ENCODE measurements at regions of chr6 and their contacts with region 1.

Region 1: DNA sequence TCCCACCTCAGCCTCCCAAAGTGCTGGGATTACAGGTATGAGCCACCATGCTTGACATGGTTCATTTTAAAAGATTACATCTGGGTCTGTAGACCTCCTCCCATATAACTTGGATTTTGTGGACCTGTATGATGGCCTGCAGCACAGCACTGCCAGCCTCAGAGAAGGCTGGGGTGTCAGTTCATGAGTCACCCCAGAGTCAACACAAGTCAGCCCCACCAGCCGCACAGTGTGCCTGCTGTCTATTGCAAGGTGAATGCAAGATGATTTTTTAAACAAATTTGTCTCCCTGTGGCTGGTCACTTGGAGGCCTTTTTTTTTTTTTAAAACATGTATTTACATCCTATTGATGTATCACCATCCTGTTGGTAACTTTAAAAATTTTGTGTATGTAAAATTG is 76.7 kb downstream of the RREB1 start:
- DNase-seq: no peak

Region 2: GRCh38 chr6:5657684-5658430 is 1526.6 kb before region 1 on chr6:
- intact Hi-C with region 1: no loop called
- DNase-seq: no peak

Region 3: DNA sequence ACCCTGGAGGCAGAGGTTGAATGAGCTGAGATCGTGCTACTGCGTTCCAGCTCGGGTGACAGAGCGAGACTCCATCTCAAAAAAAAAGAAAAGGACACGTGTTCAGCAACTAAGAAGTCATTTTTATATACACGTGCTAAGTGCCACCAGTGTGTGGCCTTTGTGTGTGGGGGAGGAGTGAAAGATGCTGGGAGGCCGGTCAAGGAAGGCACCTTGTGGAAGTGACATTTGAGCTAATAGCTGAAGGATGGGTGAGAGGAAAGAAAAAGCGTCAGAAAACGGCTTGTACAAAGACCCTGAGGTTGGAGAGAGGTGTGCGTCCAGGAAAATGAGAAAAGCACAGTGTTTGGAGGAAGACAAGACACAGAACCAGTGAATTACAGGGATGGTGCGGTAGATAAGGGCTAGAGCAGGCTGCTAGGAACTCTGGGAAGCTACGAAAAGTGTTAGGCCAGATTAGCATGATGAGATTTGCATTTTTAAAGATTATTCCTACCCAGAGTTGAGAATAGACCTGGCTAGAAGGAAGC is 65.2 kb before region 1 on chr6:
- intact Hi-C with region 1: loop called in 1 of 2 experiments (anchors 2 kb)
- DNase-seq: no peak

Measured in posterior vena cava (tissue), 2 donors.